Posterior cingulate gyrus (tissue), 11 donors: ENCODE measurements at regions of chr13 and their contacts with region 1.

Region 1: GRCh38 chr13:60617991-60618733 is 221.1 kb downstream of the TDRD3 start:
- DNase-seq: no peak

Region 2: DNA sequence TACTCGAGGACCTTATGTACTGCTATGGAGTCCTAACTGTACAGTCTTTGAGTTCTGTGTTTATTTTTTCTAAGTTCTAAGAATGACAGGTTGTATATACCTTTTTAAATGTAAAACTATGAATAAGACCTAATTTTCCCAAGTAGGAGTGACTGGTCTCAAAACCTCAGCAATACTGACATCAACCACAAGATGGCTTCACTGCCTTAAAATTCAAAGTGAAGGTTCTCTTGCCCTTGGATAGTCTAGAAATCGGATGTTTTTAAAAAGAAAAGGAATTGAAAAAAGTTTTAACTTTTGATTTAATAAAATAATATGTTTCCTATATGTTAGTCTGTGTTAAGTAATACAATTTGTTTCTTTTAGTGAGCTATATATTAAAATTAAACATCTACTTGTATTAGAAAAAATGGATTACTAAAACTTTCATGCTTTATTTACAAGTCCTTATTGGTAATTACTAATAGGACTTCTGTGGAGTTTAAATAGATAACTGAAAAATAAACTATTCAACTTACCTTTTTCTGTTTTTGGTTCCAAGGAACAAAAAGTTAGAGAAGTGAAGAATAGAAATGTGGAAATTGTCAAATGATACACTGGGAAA is 169.2 kb before region 1 on chr13:
- intact Hi-C with region 1: loop called (anchors 5 kb)
- DNase-seq: peak in 1 of 10 donors; percentile 14